ENCODE measurements at regions of chr2 and their contacts with region 1.

Region 1: DNA sequence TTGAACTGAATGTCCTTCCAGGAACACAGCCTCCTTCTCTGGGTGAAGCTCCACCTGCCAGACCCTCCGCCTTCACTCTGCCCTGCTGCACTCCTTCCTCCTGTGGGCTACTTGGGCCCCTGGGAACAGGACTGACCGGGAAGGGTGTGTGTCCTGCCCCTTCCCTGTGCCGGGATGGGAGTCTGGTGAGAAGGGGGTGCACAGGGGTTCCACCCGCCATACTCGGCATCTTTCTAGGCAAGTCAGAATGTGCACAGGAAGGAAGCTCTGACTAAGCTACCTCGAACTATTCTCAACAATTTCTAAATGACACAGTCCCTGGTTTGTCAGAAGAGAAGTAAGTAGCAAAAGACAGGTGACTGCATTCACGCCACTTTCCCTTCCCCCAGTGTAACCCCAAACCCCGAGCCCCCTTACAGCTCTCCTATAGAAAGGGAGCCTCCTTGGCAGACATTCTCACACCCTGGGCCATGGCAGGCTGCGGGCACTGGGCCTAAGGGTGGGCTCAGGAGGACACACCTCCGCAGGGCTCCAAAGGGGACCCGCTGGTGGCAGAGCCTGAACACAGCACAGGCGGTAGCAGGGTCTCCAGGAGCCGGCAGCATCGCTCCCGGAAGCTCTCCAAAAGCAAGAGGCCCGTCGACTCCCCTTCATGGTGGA is 184.1 kb downstream of the HDAC4 start:
- DNase-seq: peak; percentile 78
- H3K4me3 Mint-ChIP-seq: peak overlapping the region; percentile 77
- H3K27ac Mint-ChIP-seq: peak overlapping the region; percentile 91
- H3K4me1 Mint-ChIP-seq: peaks cover 43% of the 10 kb centered on the region
- H3K27me3 Mint-ChIP-seq: no peaks in the 10 kb centered on the region

Region 2: DNA sequence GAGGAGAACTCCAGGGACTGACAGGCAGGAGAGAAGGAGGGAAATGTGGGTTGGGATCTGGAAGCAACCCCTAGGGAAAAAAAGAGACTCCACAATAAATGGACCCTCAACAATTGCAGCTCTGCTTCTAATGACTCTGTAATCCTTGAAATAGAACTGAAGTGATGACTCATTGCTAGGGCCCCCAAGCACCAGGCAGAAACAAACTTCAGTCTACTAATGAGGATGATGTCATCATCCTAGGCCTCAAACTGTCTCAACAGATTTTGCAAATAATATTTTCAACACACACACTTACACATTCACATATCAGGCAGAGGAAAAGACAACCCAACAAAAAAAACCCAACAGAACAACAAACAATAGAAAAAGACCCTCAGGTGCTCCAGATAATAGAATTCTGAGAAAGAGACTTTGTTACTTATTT is 40.8 kb after region 1 on chr2:
- intact Hi-C with region 1: loop called (anchors 2 kb)
- DNase-seq: no peak
- H3K4me3 Mint-ChIP-seq: peak overlapping the region; percentile 78
- H3K27ac Mint-ChIP-seq: peak overlapping the region; percentile 61
- H3K4me1 Mint-ChIP-seq: peaks cover 74% of the 10 kb centered on the region
- H3K27me3 Mint-ChIP-seq: no peaks in the 10 kb centered on the region

Region 3: DNA sequence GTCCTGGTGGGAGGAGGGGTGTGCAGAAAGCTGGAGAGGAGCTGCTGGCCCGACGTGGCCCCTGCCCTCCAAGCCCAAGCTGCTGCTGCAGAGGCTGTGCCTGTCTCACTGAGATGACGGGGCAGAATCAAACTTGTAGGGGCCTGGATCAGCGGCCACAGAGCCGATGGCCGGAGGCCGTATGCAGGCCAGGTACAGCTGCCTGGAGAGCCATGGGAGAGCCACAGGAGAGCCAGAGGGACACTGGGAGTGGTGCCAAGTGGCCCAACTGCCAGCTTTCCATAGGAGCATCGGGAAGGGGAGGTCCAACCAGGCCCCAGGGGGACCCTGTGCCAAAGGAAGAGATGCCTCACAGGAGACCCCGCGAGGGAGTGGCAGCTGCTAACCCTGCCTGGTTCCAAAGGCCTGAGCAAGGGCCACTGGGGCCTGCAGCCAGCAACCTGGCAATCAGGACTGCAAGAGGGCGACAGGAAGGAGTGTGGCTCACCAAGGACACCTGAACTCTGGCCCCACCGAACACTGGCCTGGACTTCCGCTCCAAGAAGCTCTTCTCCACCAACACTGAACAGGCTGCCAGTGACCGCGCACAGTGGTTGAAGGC is 113.3 kb after region 1 on chr2:
- intact Hi-C with region 1: no loop called
- DNase-seq: no peak
- H3K4me3 Mint-ChIP-seq: no peak overlapping the region
- H3K27ac Mint-ChIP-seq: no peak overlapping the region
- H3K4me1 Mint-ChIP-seq: peaks cover 48% of the 10 kb centered on the region
- H3K27me3 Mint-ChIP-seq: no peaks in the 10 kb centered on the region

Region 4: DNA sequence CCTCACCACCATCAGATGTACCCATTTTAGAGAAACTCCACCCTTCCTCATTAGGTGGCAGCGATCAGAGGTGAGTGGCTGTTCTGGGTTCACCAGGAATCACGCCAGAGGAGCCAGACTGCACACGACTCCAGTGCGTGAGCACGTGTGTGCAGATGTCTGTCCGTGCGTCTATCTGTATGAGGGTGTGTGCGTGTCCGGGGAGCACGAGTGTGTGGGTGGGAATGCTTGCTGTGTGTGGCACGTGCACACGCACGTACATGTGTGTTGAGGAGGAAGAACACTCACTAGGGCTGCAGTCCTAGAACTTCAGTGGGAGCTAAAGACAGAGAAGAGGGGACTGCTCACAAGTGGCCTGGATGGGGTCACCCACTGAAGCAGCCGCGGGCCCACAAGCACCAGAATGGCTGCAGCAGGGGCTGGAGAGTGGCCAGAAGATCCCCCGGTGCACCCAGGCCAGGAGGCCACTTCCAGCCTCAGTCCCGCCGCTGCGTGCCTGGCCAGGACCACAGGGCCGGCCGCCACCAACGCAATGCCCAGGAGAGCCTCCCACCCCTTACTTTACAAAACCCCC is 170.2 kb after region 1 on chr2:
- intact Hi-C with region 1: no loop called
- DNase-seq: no peak
- H3K4me3 Mint-ChIP-seq: no peak overlapping the region
- H3K27ac Mint-ChIP-seq: no peak overlapping the region
- H3K4me1 Mint-ChIP-seq: peaks cover 26% of the 10 kb centered on the region
- H3K27me3 Mint-ChIP-seq: no peaks in the 10 kb centered on the region

Measured in activated CD4-positive, alpha-beta T cell treated with anti-CD3 and anti-CD28 coated beads, Interleukin-2, amount 10 ng/mL, durations not matched to agents 24 days and 14 days (primary cell).